Heart right ventricle (tissue), 16 donors: ENCODE measurements at regions of chr11 and their contacts with region 1.

Region 1: DNA sequence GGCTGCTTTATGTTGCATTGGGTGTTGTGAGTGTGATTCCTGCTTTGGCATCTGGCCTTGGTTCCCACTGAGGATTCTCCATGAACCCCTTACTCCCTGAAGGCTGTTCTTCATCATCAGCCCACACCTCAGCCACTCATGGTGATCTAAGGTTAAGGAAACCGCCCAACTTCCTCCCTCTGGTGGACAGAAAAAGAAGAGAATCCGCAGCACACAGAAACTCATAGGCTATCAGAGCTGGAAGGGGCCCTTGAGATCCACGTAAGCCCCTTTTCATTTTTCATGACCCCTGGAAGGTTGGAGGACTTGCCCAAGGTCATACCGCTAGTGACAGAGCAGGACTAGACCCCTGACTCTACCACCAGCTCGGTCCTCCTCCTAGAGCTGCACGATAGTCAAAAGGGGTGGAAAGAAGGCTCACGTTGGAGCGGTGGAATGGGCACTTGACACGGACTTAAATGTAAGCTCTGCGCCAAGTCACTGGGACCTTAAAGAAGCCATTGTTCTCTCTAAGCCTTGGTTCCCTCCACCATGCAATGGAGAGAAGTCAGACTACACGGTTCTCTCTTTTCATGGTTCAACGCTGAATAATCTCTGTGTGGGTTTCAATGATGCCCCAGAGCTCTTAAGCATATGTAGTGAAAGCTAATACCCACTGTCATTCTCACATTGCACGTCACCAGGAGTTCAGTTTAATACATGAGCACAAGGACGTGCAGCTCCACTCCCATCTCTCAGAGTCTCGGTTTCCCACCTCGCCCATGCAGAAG is 83.6 kb upstream of the CRTAM start:
- DNase-seq: no peak
- ATAC-seq: peak in 1 of 8 donors; percentile 52
- H3K4me3 ChIP-seq: no peak overlapping the region
- H3K27ac ChIP-seq: peak overlapping the region in 1 of 10 donors; percentile 56
- H3K4me1 ChIP-seq: peaks cover 0 to 39% (median 6%) of the 10 kb centered on the region in 9 donors
- H3K27me3 ChIP-seq: peaks cover 0 to 5% (median 0%) of the 10 kb centered on the region in 7 donors
- CTCF ChIP-seq: peak in 7 of 9 donors; percentile 15 to 55 (median 31)

Region 2: DNA sequence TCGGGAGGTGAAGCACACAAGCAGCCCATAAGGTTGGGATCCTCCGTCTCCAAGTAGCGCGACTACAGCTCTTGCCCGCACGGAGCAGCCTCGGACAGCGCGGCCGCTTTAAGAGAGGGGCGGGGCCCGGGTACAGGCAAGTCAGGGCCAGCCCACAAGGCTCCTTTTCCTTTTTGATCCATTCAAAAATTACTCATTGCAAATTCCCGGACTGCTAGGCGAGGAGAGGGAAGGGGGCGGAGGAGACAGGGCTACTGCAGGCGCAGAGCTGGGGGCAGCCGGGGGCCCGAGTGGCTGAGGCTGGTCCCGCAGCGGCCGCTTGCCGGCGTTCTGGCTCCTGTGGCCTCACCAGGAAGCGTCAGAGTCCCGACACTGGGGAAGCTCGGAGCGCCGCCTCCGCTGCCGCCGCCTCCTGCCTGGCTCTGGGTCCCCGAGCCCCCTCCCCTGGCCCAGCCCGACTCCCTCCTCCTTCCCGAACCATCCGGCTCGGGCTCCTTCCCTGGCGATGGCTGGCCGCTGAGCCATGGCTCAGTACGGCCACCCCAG is 99.1 kb before region 1 on chr11 and contains the start of gene UBASH3B:
- intact Hi-C with region 1: loop called in 1 of 10 experiments (anchors 10 kb)
- DNase-seq: peak; percentile 70 to 79
- ATAC-seq: peak; percentile 84 to 93 (median 91)
- H3K4me3 ChIP-seq: peak within 1 kb of the TSS; percentile 61 to 96 (median 78)
- H3K27ac ChIP-seq: peak within 1 kb of the TSS; percentile 34 to 97 (median 87)
- H3K4me1 ChIP-seq: peaks cover 4 to 55% (median 15%) of the 10 kb centered on the region in 9 donors
- H3K27me3 ChIP-seq: peaks cover 0 to 19% (median 10%) of the 10 kb centered on the region in 7 donors
- CTCF ChIP-seq: peak in 4 of 9 donors; percentile 7 to 39 (median 24)
- total RNA-seq, gene UBASH3B: 0.66 to 8.0 (median 1.6) TPM

Region 3: DNA sequence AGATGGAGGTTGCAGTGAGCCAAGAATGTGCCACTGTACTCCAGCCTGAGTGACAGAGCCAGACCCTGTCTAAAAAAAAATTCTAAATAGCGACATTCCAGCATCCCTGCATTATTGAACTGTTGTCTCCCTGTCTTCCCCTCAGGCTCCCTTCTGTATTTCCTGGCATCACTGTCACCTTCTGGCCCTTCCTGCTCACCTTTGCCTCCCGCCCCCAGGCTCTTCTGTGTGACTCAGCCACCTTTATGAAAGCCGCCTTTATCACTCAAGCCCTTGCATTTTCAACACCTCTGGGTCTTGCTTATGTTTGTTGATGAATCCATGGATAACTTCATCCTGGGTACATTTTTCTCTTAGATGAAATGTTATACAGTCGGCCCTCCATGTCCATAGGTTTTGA is 78.1 kb before region 1 on chr11:
- intact Hi-C with region 1: loop called in 1 of 10 experiments (anchors 5 kb)
- DNase-seq: no peak
- ATAC-seq: no peak
- H3K4me3 ChIP-seq: no peak overlapping the region
- H3K27ac ChIP-seq: no peak overlapping the region
- H3K4me1 ChIP-seq: peaks cover 0 to 38% (median 0%) of the 10 kb centered on the region in 9 donors
- H3K27me3 ChIP-seq: no peaks in the 10 kb centered on the region
- CTCF ChIP-seq: no peak

Region 4: DNA sequence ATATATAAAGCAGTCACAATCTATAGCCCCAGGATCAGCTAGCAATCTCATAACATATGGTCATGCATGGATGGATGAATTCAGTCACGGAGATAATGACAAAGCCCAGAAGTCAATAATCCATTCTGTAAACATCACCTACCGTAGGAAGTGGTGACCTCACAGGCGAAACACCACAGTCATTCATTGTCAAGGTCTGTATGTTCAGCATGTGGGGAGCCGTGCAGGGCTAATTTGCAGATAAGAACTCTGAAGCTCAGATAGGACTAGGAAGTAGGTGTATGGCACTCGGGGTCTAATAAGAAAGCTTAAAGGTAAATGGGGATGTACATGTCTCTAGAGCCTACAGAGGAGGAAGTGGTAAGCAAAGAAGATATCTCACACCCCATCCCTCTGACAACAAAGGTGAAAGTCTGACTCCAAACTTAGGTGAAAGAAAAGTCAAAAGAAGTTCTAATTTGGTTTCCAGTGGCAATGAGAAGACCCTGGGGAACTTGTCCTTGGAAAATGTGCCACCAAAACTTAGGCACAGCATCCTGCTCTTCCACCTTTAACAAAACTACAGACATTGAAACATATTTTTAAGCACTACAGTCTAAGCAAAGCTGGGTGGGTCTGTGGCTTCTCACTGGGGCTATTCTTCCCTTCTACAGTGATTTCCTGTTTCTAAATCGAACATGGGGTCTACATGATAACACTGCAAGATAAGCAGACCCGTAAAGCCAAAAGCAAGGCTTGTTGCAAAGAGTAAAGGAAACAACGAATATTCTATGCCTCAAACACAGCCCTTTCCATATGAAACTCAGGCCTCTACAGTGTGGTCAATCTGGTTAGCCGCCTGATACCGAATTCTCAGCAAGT is 88.8 kb after region 1 on chr11:
- intact Hi-C with region 1: no loop called
- DNase-seq: no peak
- ATAC-seq: no peak
- H3K4me3 ChIP-seq: no peak overlapping the region
- H3K27ac ChIP-seq: peak overlapping the region in 1 of 10 donors; percentile 45
- H3K4me1 ChIP-seq: no peaks in the 10 kb centered on the region
- H3K27me3 ChIP-seq: peaks cover 0 to 11% (median 0%) of the 10 kb centered on the region in 7 donors
- CTCF ChIP-seq: no peak

Region 5: DNA sequence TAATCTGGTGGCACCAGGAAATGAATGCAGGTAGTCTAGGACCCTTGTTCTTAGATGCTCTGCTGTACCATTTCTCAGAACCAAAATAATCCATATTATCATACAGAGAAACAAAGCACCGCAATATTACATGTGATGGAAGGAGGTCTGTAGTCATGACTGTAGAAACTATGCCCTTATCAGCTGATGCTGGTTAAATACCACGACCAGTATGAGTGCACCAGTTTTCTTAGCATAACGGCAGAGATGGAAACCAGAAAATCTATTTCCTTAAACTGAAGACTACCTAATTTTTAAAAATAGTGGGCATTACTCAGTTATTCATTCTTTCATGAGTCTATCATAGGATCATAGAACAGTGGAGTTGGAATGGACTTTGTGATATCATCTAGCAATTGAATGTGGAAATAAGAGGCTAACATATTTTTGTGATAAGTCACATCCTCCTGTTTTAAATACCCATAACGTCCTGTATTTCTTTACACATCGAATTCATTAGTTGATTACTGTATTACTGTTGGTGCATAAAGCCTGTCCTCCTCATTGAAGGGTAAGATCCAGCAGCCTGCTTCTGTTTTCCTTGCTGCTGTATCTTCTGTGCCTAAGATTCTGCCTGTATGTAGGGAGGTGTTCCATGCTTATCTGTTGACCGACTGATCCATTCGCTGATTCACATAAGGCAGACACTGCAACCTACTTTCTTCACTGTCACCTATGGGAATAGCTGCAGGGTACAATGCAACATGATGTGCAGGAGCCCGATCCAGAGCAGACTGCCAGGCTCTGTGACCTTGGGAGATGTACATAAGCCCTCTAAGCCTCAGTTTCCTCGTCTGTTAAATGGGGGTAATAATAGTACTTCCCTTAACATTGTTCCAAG is 143.1 kb after region 1 on chr11:
- intact Hi-C with region 1: no loop called
- DNase-seq: no peak
- ATAC-seq: no peak
- H3K4me3 ChIP-seq: no peak overlapping the region
- H3K27ac ChIP-seq: no peak overlapping the region
- H3K4me1 ChIP-seq: no peaks in the 10 kb centered on the region
- H3K27me3 ChIP-seq: no peaks in the 10 kb centered on the region
- CTCF ChIP-seq: no peak